Colonic mucosa (tissue), 4 donors: ENCODE measurements at regions of chr3 and their contacts with region 1.

Region 1: DNA sequence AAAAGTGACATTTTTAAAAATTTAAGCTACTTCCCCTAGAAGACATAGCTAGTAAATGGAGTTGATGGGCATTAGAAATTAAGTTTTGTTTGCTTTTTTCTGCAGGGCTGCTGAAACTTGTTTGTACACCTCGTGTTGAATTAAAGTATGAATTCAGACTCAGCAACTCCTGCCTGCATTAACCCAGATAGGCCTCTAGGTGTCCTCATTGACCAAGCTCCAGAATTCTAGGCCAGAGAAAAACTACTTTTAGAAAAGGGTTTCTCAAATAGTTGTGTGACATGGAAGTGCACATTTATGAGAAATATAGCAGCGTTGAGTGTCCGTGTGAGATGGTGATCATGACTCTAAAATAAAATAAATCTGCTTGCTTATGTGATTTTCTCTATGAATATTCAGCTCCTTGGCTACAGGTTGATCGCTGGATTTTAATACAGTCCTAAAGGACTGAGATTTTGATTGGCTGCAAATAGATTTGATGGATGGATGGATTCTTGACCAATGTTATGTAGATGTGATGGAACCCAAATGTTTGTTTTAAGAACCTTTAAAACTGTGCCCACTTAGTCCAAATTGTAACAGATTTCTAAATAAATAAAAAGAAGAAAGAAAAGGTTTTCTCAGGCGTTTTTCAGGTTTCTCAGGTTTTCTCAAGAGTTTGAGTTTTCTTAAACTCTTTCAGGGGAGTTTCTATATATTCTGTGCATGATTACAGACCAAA is 39.4 kb upstream of the LMOD3 start:
- DNase-seq: peak; percentile 30
- H3K4me3 ChIP-seq: no peak overlapping the region
- H3K27ac ChIP-seq: no peak overlapping the region
- H3K4me1 ChIP-seq: no peaks in the 10 kb centered on the region
- H3K27me3 ChIP-seq: no peaks in the 10 kb centered on the region
- CTCF ChIP-seq: peak; percentile 95

Region 2: GRCh38 chr3:69410250-69410649 is 248.5 kb after region 1 on chr3:
- intact Hi-C with region 1: loop called (anchors 5 kb)
- DNase-seq: peak; percentile 84
- H3K4me3 ChIP-seq: no peak overlapping the region
- H3K27ac ChIP-seq: no peak overlapping the region
- H3K4me1 ChIP-seq: no peaks in the 10 kb centered on the region
- H3K27me3 ChIP-seq: no peaks in the 10 kb centered on the region
- CTCF ChIP-seq: peak; percentile 75

Region 3: DNA sequence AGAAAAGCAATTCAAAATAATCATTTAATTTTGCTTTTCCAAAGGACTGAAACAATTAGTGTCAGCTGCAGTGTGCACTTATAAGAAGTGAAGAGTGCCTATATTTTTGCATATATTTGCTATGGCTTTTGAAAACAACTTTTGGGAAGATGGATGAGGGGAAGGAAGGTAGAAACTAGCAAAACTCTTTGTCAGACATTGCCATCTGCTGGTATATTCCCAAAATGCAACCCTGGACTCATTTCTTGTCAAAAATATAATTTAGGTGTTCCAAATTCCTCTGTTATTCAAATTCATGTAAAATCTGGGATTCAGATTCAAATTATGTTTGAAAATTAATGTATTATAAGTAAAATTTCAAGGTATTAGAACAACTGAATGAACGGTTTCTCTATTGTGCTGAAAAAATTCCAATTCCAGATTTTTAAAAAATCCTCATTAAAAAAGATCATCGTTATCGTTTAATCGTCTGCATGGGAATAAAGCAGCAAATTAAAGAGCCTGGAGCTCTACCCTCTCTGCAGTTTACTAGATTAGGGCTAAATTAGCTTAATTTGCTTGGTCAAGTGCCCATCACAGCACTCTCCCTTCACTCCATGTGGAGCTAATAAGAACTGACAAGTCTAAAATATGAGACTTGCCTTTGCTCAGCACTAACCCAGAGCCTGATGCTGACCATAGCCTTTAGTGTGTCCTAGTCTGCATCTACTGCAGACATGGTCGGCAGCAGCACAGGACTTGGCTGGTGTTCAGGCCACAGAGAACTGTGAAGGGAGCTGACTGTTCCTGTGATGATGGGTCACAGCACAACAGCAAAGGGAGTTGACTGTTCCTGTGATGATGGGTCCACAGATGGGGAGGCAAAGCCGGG is 509.6 kb after region 1 on chr3:
- intact Hi-C with region 1: loop called (anchors 2 kb)
- DNase-seq: peak; percentile 55
- H3K4me3 ChIP-seq: no peak overlapping the region
- H3K27ac ChIP-seq: no peak overlapping the region
- H3K4me1 ChIP-seq: no peaks in the 10 kb centered on the region
- H3K27me3 ChIP-seq: no peaks in the 10 kb centered on the region
- CTCF ChIP-seq: peak; percentile 78